ENCODE measurements at regions of chr3 and their contacts with region 1.

Region 1: DNA sequence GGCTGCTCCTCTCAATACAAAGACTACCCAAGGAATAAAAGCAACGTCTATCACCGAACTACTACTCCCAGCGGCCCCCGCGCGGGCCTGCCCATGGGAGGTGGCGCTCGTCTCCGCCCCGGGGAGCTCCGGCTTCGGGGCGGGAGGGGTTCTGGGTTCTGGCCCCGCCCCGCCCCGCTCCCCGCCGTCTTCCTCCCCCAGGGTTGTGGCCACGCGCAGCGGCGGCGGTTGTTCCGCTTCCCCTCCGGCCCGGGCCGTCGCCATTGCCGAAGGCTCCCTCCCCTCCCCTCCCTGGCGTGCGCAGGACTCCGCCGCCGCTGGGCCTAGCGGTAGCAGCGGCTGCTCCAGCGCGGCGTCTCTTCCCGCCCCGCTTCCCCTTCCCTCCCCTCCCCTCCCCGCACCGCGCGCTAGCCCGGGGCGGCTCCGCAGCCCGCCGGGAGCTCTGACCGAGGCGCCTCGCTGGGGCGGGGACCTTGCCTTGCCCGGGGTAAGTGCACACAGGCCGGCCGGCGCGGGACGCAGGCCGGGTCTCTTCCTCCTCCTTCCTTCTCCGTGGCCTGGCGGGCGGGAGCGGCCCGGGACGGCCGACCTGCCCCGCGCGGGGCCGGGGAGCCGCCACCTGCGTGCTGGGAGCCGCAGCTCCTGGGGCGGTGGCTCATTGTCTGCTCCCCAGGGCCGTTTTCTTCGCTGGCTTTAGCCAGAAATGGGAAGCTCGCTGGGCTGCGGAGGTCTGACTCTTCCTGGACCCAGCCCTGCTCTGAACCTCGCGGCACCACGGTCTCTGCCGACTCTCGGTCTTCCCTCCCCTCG is at the start of gene PAK2:
- DNase-seq: peak; percentile 94
- ATAC-seq: peak; percentile 92
- H3K4me3 Mint-ChIP-seq: peak within 1 kb of the TSS; percentile 93
- H3K27ac Mint-ChIP-seq: peak within 1 kb of the TSS; percentile 99
- H3K4me1 Mint-ChIP-seq: peaks cover 25% of the 10 kb centered on the region
- H3K27me3 Mint-ChIP-seq: no peaks in the 10 kb centered on the region
- total RNA-seq, gene PAK2: 57.6 to 82.2 TPM

Region 2: DNA sequence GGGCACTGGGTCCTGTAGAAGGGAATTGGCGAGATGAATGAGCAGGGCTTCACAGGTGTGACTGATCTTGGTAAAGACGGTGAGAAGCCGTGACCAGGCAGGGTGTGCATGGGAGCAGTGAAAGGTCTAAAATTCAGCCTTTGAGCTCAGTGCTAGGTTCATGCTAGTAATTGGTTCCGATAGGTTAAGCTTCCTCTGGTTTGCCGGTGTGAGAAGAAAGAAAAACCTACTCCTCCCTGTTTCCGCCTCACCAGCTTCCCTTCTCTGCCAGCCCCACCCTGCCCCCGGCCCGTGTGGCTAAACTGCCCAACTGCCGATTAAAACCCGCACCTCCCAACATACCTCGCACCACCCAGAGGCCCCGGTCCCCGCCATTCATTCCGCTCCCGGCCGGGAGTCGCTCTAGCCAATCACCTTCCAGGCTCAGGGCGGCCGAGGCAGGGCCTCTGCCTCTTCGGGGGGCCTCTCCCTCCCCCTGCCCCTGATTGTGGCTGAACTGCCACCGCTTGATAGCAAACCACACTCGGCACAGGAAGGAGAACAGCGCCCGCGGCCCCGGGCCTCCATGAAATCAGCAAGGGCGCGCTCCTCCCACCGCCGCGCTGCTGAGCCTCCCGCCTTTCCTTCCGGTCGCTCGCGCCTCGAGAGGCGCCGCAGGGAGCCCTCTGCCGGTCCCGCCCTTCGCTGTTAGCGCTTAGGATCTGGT is 107.7 kb before region 1 on chr3:
- CTCF ChIA-PET with region 1: no interaction called
- POLR2A ChIA-PET with region 1: no interaction called
- intact Hi-C with region 1: loop called in 1 of 2 experiments (anchors 1 kb)
- DNase-seq: peak; percentile 93
- ATAC-seq: peak; percentile 80
- H3K4me3 Mint-ChIP-seq: peak overlapping the region; percentile 81
- H3K27ac Mint-ChIP-seq: peak overlapping the region; percentile 95
- H3K4me1 Mint-ChIP-seq: peaks cover 55% of the 10 kb centered on the region
- H3K27me3 Mint-ChIP-seq: no peaks in the 10 kb centered on the region

Region 3: GRCh38 chr3:196803891-196804468 is 64.1 kb after region 1 on chr3:
- CTCF ChIA-PET with region 1: no interaction called
- POLR2A ChIA-PET with region 1: no interaction called
- intact Hi-C with region 1: loop called in 1 of 2 experiments (anchors 5 kb)
- DNase-seq: no peak
- ATAC-seq: peak; percentile 80
- H3K4me3 Mint-ChIP-seq: peak overlapping the region; percentile 8
- H3K27ac Mint-ChIP-seq: peak overlapping the region; percentile 86
- H3K4me1 Mint-ChIP-seq: peaks cover 20% of the 10 kb centered on the region
- H3K27me3 Mint-ChIP-seq: no peaks in the 10 kb centered on the region

Region 4: GRCh38 chr3:197093871-197094270 is 354.0 kb after region 1 on chr3:
- CTCF ChIA-PET with region 1: no interaction called
- POLR2A ChIA-PET with region 1: no interaction called
- intact Hi-C with region 1: no loop called
- DNase-seq: no peak
- ATAC-seq: no peak
- H3K4me3 Mint-ChIP-seq: no peak overlapping the region
- H3K27ac Mint-ChIP-seq: no peak overlapping the region
- H3K4me1 Mint-ChIP-seq: peaks cover 3% of the 10 kb centered on the region
- H3K27me3 Mint-ChIP-seq: no peaks in the 10 kb centered on the region

Measured in activated CD4-positive, alpha-beta T cell treated with anti-CD3 and anti-CD28 coated beads for 36 hours (primary cell).